Activated naive CD4-positive, alpha-beta T cell treated with anti-CD3 and anti-CD28 coated beads for 36 hours (primary cell): ENCODE measurements at regions of chr7 and their contacts with region 1.

Region 1: GRCh38 chr7:106071356-106071998 is 40.6 kb downstream of the SYPL1 start:
- DNase-seq: peak; percentile 78
- H3K4me3 Mint-ChIP-seq: peak overlapping the region; percentile 65
- H3K27ac Mint-ChIP-seq: peak overlapping the region; percentile 91
- H3K4me1 Mint-ChIP-seq: peaks cover 34% of the 10 kb centered on the region
- H3K27me3 Mint-ChIP-seq: no peaks in the 10 kb centered on the region

Region 2: DNA sequence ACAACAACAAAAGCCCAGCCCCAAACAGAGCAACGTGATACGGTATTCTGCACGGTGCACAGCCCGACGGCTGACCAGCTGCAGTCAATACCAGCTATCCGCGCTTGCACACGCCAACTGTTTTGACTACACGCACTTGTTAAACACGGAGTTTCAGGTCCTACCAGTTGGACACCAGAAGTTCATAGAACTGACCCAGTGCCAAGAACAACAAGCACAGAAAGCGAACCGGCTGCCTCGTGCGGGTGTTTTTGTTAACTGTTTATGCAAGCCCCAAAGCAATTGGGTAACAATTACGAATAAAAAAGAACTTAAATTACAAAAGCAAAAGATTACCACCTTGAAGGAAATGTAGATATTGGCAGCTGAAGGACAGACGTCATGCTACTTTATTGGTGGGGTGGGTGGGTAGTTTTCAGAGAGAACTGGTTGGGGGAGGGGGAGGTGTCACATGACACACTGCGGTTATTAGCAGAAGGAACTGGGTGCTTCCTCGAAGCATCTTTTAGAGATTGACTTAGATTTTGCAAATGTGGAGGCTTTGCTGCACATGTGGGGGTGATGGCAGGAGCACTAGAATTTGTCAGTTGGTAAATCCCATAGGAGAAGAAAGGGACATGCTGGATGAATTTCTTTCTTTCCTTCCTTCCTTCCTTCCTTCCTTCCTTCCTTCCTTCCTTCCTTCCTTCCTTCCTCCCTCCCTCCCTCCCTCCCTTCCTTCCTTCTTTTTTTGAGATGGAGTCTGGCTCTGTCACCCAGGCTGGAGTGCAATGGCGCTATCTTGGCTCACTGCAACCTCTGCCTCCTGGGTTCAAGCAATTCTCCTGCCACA is 379.5 kb before region 1 on chr7:
- CTCF ChIA-PET with region 1: no interaction called
- intact Hi-C with region 1: loop called (anchors 1 kb)
- DNase-seq: peak; percentile 80
- H3K4me3 Mint-ChIP-seq: peak overlapping the region; percentile 77
- H3K27ac Mint-ChIP-seq: peak overlapping the region; percentile 79
- H3K4me1 Mint-ChIP-seq: peaks cover 36% of the 10 kb centered on the region
- H3K27me3 Mint-ChIP-seq: no peaks in the 10 kb centered on the region

Region 3: DNA sequence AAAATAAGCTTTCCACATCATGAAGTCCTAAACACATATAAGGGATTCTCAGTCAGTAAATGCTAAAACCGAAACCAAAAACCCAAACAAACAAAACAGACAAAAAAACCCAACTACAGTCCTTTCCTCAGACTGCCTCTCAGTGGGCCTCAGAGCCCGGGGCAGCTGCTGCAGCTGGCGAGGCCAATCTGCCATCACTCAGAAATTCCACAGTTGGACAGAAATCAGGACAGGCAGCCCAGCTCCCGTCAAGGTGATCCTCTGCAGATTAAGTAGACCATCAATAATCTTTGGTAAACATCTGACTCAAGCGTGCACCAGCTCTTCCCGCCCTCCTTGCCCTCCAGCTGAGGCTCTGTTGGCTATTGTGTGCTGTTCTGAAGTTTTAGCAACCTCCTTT is 337.2 kb before region 1 on chr7:
- CTCF ChIA-PET with region 1: no interaction called
- intact Hi-C with region 1: no loop called
- DNase-seq: no peak
- H3K4me3 Mint-ChIP-seq: no peak overlapping the region
- H3K27ac Mint-ChIP-seq: no peak overlapping the region
- H3K4me1 Mint-ChIP-seq: no peaks in the 10 kb centered on the region
- H3K27me3 Mint-ChIP-seq: no peaks in the 10 kb centered on the region

Region 4: DNA sequence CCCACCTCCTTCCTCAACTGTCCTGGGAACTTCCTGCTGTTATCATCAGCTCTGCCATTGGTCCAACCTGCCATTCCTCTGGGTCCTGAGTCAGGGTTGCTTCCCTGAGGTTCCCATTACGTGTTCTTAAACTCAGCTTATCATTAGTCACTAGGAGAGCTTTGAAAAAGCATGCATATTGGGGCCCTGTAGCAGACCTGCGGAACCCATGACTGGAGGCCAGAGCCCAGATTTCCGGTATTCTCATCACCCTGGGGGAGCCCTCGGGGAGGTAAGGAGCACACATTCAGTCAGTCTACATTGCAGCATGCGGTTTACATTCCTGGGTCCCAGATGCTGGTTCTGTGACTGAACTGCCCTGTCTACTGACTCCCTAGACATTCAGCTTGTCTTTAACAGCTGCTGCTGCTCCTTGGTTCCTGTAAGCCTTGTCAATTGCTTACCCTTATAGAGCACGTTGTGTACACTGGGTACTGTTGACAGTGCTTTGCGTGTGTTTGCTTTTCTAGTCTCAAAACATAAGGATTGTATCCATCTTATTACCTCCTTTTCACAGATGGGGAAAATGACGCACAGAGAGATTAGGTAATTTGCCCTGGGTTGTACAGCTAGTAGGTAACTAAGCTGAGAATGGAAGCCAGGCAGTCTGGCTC is 95.6 kb before region 1 on chr7:
- CTCF ChIA-PET with region 1: no interaction called
- intact Hi-C with region 1: no loop called
- DNase-seq: no peak
- H3K4me3 Mint-ChIP-seq: no peak overlapping the region
- H3K27ac Mint-ChIP-seq: no peak overlapping the region
- H3K4me1 Mint-ChIP-seq: no peaks in the 10 kb centered on the region
- H3K27me3 Mint-ChIP-seq: no peaks in the 10 kb centered on the region

Region 5: DNA sequence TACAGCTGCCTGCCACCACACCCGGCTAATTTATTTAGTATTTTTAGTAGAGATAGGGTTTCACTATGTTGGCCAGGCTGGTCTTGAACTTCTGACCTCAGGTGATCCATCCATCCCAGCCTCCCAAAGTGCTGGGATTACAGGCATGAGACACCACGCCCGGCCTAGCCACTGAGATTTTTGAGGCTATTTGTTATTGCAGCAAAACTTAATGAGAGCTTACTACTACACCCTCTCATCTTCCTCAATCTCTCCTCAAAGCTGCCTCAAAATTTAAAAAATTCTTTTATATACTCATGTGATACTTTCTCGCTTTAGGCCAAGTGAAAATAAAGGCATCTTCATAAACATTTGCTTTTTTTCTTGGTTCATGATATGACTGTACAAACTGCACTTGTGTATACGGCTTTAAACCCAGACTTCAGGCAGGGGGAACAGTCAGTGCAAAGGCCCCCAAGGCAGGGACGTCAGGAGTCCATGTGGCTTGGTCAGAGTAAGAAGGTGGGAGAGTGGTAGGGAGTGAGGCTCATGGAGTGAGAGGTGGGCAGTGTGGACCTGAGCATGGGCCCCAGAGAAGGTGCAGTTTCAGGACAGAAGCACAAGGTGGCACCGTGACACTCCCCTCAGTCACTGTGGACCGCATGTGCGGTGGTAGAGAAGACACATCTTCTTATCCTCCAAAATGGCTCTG is 14.8 kb before region 1 on chr7:
- CTCF ChIA-PET with region 1: interaction called, 28 read pairs
- intact Hi-C with region 1: no loop called
- DNase-seq: peak; percentile 84
- H3K4me3 Mint-ChIP-seq: no peak overlapping the region
- H3K27ac Mint-ChIP-seq: no peak overlapping the region
- H3K4me1 Mint-ChIP-seq: peaks cover 16% of the 10 kb centered on the region
- H3K27me3 Mint-ChIP-seq: no peaks in the 10 kb centered on the region

Region 6: DNA sequence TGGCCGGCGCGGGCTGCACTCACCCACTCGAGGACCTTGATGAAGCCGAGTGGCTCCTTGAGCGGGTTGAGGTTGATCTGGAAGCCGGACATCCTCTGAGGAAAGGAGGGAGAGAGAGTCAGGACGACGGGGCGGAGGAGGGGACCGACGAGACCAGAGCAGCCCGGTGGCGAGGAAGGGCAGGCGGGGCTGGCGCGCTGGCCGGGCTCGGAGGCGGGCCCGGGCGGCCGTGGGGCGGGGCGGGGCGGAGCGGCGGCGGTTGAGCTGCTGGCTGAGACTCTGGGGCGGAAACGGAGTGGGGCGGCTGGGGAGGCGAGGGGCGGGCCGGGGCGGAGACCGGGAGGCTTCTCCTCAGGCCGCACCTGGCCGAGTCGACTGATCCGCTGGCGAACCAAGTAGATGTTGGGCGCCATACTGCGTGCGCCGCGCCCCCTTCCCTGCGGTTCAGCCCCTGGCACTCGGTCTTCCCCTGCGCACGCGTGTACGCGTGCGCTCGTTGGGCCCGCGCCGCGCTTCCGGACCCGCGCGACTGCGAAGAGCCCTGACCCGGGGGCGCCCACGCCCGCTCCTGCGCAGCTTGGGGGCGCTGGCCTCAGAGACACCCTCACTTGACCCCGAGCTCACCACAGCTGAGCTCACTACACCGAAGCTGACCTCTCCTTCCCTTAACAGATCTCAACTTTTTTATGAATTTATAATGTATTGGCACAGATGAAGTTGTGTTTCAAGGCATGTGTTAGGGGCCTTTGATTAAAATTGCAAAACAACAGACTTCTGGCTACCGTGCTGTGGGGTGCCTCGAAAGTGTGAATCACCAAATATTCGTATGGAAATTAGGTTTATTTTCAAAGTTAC is 40.9 kb after region 1 on chr7 and contains the start of gene SYPL1:
- CTCF ChIA-PET with region 1: interaction called, 7 read pairs
- intact Hi-C with region 1: loop called (anchors 1 kb)
- DNase-seq: peak; percentile 94
- H3K4me3 Mint-ChIP-seq: peak within 1 kb of the TSS; percentile 85
- H3K27ac Mint-ChIP-seq: peak within 1 kb of the TSS; percentile 92
- H3K4me1 Mint-ChIP-seq: peaks cover 71% of the 10 kb centered on the region
- H3K27me3 Mint-ChIP-seq: no peaks in the 10 kb centered on the region
- total RNA-seq, gene SYPL1: 24.7 to 26.6 TPM

Region 7: DNA sequence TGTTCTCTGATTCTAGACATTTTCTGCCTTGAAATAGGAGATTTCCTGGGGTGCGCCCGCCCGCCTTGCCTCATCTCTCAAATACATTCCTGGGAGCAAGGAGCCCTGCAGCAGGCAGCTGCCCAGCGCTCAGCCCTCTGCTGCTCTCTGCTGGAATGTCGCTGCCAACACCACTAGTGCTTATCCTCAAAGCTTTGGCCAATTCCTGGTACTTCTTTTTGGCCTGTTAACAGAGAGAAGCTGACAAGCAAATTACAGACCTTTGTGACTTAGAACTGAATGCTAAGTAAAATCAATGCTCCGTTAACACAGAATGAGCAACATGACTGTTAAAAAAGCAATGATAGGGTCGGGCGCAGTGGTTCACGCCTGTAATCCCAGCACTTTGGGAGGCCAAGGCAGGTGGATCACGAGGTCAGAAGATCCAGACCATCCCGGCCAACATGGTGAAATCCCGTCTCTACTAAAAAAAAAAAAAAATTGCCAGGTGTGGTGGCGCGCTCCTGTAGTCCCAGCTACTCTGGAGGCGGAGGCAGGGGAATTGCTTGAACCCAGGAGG is 82.5 kb after region 1 on chr7:
- CTCF ChIA-PET with region 1: interaction called, 25 read pairs
- intact Hi-C with region 1: no loop called
- DNase-seq: peak; percentile 84
- H3K4me3 Mint-ChIP-seq: no peak overlapping the region
- H3K27ac Mint-ChIP-seq: no peak overlapping the region
- H3K4me1 Mint-ChIP-seq: peaks cover 9% of the 10 kb centered on the region
- H3K27me3 Mint-ChIP-seq: peaks cover 14% of the 10 kb centered on the region

Region 8: DNA sequence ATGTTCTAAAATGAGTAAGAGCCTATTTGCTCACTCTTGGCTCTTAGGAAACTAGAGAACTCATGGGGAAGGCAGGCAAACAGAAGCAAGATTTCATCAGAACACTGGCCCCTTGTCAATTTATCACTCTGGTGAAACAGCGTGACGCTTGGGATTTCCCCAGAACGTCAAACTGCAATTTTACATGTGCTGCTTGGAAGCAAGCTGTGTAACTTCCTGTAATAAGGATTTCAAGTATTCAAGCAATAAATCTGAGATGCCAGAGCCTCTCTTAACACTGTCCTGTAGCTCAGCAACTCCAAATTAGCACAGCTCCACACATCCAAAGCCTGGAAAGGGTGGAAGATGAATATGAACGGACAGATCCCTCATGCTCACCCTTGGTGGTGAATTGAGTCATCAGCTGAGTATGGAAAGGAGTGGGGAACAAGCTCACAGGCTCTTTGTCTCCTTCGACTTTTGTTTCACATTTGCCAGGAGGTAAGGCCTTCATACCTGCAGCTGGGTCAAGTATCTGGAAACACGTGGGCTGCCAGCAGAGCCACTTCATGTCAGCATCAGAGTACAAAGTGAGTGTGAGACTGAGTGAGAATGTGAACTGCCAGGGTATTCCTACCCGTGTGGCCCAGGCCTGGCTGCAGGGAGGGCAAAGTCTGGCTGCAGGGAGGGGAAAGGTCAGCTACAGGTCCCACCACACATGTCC is 353.7 kb after region 1 on chr7:
- CTCF ChIA-PET with region 1: no interaction called
- intact Hi-C with region 1: loop called (anchors 1 kb)
- DNase-seq: peak; percentile 96
- H3K4me3 Mint-ChIP-seq: peak overlapping the region; percentile 80
- H3K27ac Mint-ChIP-seq: peak overlapping the region; percentile 99
- H3K4me1 Mint-ChIP-seq: peaks cover 86% of the 10 kb centered on the region
- H3K27me3 Mint-ChIP-seq: peaks cover 3% of the 10 kb centered on the region

Region 9: GRCh38 chr7:106736508-106737201 is 665.2 kb after region 1 on chr7:
- CTCF ChIA-PET with region 1: no interaction called
- intact Hi-C with region 1: loop called (anchors 10 kb)
- DNase-seq: peak; percentile 72
- H3K4me3 Mint-ChIP-seq: no peak overlapping the region
- H3K27ac Mint-ChIP-seq: peak overlapping the region; percentile 74
- H3K4me1 Mint-ChIP-seq: peaks cover 27% of the 10 kb centered on the region
- H3K27me3 Mint-ChIP-seq: no peaks in the 10 kb centered on the region